ENCODE measurements at regions of chr21 and their contacts with region 1.

Region 1: GRCh38 chr21:25967573-25968438 is 202.8 kb downstream of the APP start:
- DNase-seq: peak; percentile 78
- ATAC-seq: peak; percentile 94
- H3K4me3 ChIP-seq: peak overlapping the region in 1 of 5 experiments; percentile 45
- H3K4me3 Mint-ChIP-seq: peak overlapping the region; percentile 80
- H3K27ac ChIP-seq: peak overlapping the region; percentile 76 to 95
- H3K27ac Mint-ChIP-seq: peak overlapping the region; percentile 99
- H3K4me1 ChIP-seq: peaks cover 26 to 32% of the 10 kb centered on the region in 2 donors
- H3K4me1 Mint-ChIP-seq: peaks cover 32% of the 10 kb centered on the region
- H3K27me3 ChIP-seq: no peaks in the 10 kb centered on the region
- H3K27me3 Mint-ChIP-seq: no peaks in the 10 kb centered on the region
- CTCF ChIP-seq: no peak

Region 2: GRCh38 chr21:25657140-25657539 is 310.7 kb before region 1 on chr21:
- CTCF ChIA-PET with region 1: no interaction called
- POLR2A ChIA-PET with region 1: no interaction called
- intact Hi-C with region 1: no loop called
- DNase-seq: no peak
- ATAC-seq: no peak
- H3K4me3 ChIP-seq: no peak overlapping the region
- H3K4me3 Mint-ChIP-seq: no peak overlapping the region
- H3K27ac ChIP-seq: no peak overlapping the region
- H3K27ac Mint-ChIP-seq: no peak overlapping the region
- H3K4me1 ChIP-seq: no peaks in the 10 kb centered on the region
- H3K4me1 Mint-ChIP-seq: no peaks in the 10 kb centered on the region
- H3K27me3 ChIP-seq: no peaks in the 10 kb centered on the region
- H3K27me3 Mint-ChIP-seq: no peaks in the 10 kb centered on the region
- CTCF ChIP-seq: no peak

Region 3: GRCh38 chr21:25734904-25735645 is 232.7 kb before region 1 on chr21 and contains the starts of genes ATP5PF and GABPA:
- CTCF ChIA-PET with region 1: no interaction called
- POLR2A ChIA-PET with region 1: no interaction called
- intact Hi-C with region 1: loop called (anchors 5 kb)
- DNase-seq: peak; percentile 99
- ATAC-seq: peak; percentile 83
- H3K4me3 ChIP-seq: peak within 1 kb of the TSS; percentile 69 to 99 (median 95)
- H3K4me3 Mint-ChIP-seq: peak within 1 kb of the TSS; percentile 100
- H3K27ac ChIP-seq: peak within 1 kb of the TSS; percentile 86 to 87
- H3K27ac Mint-ChIP-seq: peak within 1 kb of the TSS; percentile 100
- H3K4me1 ChIP-seq: peaks cover 44 to 46% of the 10 kb centered on the region in 2 donors
- H3K4me1 Mint-ChIP-seq: peaks cover 58% of the 10 kb centered on the region
- H3K27me3 ChIP-seq: no peaks in the 10 kb centered on the region
- H3K27me3 Mint-ChIP-seq: no peaks in the 10 kb centered on the region
- CTCF ChIP-seq: no peak
- total RNA-seq, gene ATP5PF: 34.1 and 36.6 TPM in 2 replicates
- total RNA-seq, gene GABPA: 29.7 and 32.9 TPM in 2 replicates

Region 4: DNA sequence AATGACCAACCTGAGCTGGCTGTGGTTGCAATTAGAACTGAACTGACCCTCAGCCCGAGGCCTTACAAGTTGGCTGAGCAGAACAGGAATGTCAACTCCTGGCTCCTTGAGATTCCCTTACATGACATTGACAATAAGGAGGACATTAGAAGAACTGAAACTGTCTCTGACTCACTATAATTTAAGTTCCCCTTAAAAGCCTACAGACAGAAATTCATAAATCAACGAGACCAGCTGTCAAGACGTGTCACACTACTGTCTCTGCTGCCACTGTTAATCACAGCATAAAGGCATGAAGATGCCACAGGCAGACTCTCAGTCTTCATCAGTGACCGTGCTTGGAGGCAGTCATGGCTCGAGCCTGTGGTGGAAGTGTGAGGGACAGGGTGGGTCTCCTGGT is 64.2 kb before region 1 on chr21:
- CTCF ChIA-PET with region 1: interaction called, 3 read pairs
- POLR2A ChIA-PET with region 1: no interaction called
- intact Hi-C with region 1: loop called (anchors 5 kb)
- DNase-seq: peak; percentile 42
- ATAC-seq: peak; percentile 92
- H3K4me3 ChIP-seq: no peak overlapping the region
- H3K4me3 Mint-ChIP-seq: peak overlapping the region; percentile 24
- H3K27ac ChIP-seq: peak overlapping the region in 1 of 2 donors; percentile 37
- H3K27ac Mint-ChIP-seq: peak overlapping the region; percentile 27
- H3K4me1 ChIP-seq: peaks cover 9% of the 10 kb centered on the region in 2 donors
- H3K4me1 Mint-ChIP-seq: peaks cover 8% of the 10 kb centered on the region
- H3K27me3 ChIP-seq: no peaks in the 10 kb centered on the region
- H3K27me3 Mint-ChIP-seq: no peaks in the 10 kb centered on the region
- CTCF ChIP-seq: no peak

Region 5: DNA sequence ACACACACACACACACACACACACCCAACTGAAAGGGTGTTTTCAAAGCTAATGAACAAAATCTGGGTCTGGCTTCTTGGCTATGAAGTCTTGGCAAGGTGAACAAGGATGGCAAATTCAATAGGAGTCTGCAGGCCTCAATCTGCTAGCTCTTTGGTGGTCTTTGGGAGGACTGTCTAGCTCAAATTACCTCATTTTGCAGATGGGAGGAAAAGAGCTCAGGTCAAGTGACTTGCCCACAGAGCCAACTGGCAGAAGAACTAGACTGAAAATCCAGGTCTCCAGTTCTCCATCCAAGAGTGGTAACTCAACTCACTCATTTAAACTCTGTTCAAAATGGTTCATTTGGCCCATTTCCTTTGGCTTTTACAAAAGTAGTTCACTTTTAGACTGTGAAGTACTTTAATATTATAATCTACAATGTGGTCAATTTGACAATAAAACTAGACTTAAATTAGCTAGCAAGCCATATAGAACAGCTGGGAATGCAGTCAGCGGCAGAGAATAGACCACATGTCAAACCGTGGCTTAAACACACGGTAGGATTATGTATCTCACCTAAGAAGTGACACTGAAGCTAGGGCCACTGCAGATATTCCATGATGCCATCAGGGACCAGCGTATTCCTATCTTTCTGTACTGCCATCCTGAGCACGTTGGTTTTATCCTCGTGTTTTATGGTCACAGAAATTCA is 89.8 kb after region 1 on chr21:
- CTCF ChIA-PET with region 1: no interaction called
- POLR2A ChIA-PET with region 1: no interaction called
- intact Hi-C with region 1: no loop called
- DNase-seq: no peak
- ATAC-seq: no peak
- H3K4me3 ChIP-seq: no peak overlapping the region
- H3K4me3 Mint-ChIP-seq: no peak overlapping the region
- H3K27ac ChIP-seq: no peak overlapping the region
- H3K27ac Mint-ChIP-seq: no peak overlapping the region
- H3K4me1 ChIP-seq: no peaks in the 10 kb centered on the region
- H3K4me1 Mint-ChIP-seq: no peaks in the 10 kb centered on the region
- H3K27me3 ChIP-seq: no peaks in the 10 kb centered on the region
- H3K27me3 Mint-ChIP-seq: no peaks in the 10 kb centered on the region
- CTCF ChIP-seq: no peak

Region 6: GRCh38 chr21:26070822-26071425 is 103.1 kb after region 1 on chr21:
- CTCF ChIA-PET with region 1: no interaction called
- POLR2A ChIA-PET with region 1: no interaction called
- intact Hi-C with region 1: loop called (anchors 10 kb)
- DNase-seq: peak; percentile 54
- ATAC-seq: peak; percentile 75
- H3K4me3 ChIP-seq: peak overlapping the region in 4 of 5 experiments; percentile 11 to 59 (median 48)
- H3K4me3 Mint-ChIP-seq: peak overlapping the region; percentile 85
- H3K27ac ChIP-seq: peak overlapping the region; percentile 39 to 67
- H3K27ac Mint-ChIP-seq: peak overlapping the region; percentile 87
- H3K4me1 ChIP-seq: peaks cover 17 to 26% of the 10 kb centered on the region in 2 donors
- H3K4me1 Mint-ChIP-seq: peaks cover 30% of the 10 kb centered on the region
- H3K27me3 ChIP-seq: no peaks in the 10 kb centered on the region
- H3K27me3 Mint-ChIP-seq: no peaks in the 10 kb centered on the region
- CTCF ChIP-seq: no peak

Region 7: DNA sequence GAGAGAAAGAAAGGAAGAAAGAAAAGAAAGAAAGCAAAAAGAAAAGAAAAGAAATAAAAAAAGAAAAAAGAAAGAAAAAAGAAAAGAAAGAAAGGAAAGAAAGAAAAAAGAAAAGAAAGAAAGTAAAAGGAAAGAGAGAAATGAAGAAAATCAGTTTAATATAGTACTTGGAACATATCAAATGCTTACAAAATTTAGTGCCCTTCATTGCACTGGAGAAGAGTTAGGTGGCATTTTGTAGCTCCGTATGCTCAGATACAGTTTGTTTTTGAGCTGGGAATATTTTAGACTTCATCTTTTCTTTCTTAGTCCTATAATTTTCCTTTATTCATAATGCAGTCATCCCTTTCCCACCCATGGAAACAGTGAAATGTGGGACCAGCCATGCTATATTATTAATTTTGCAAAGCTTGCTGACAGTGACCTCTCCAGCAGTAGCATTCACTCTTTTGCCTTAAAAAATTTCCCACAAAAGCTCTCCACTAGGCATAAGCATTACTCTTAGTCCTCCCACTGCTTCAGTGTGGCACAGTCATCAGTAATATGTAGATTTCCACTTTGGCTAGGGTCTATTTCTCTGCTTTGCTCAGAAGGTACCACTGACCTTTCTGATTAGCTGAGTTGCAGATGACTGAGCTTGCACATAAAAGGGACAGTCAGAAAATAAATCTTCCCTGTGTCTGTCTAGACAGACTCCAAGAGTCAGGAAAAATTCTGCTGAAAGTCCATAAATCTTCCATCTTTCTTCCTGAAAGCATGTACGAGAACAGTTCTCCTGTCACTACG is 259.1 kb after region 1 on chr21:
- CTCF ChIA-PET with region 1: no interaction called
- POLR2A ChIA-PET with region 1: no interaction called
- intact Hi-C with region 1: no loop called
- DNase-seq: no peak
- ATAC-seq: no peak
- H3K4me3 ChIP-seq: no peak overlapping the region
- H3K4me3 Mint-ChIP-seq: no peak overlapping the region
- H3K27ac ChIP-seq: no peak overlapping the region
- H3K27ac Mint-ChIP-seq: no peak overlapping the region
- H3K4me1 ChIP-seq: no peaks in the 10 kb centered on the region
- H3K4me1 Mint-ChIP-seq: no peaks in the 10 kb centered on the region
- H3K27me3 ChIP-seq: peaks cover 0 to 3% (median 0%) of the 10 kb centered on the region in 4 experiments
- H3K27me3 Mint-ChIP-seq: peaks cover 4% of the 10 kb centered on the region
- CTCF ChIP-seq: peak; percentile 17